HCT116 (cell line): ENCODE measurements at regions of chr21 and their contacts with region 1.

Region 1: GRCh38 chr21:44568754-44569556 is 4.6 kb upstream of the KRTAP10-4 start:
- DNase-seq: no peak
- ATAC-seq: no peak; the same call in 1 of the 2 replicates
- H3K4me3 ChIP-seq: no peak overlapping the region
- H3K27ac ChIP-seq: no peak overlapping the region
- H3K4me1 ChIP-seq: no peaks in the 10 kb centered on the region
- H3K27me3 ChIP-seq: peaks cover 6% of the 10 kb centered on the region
- CTCF ChIP-seq: no peak
- POLR2A ChIP-seq: no peak
- RAD21 ChIP-seq: no peak

Region 2: GRCh38 chr21:44487831-44488230 is 81.1 kb before region 1 on chr21:
- CTCF ChIA-PET with region 1: no interaction called
- POLR2A ChIA-PET with region 1: no interaction called
- RAD21 ChIA-PET with region 1: no interaction called
- intact Hi-C with region 1: no loop called
- DNase-seq: peak; percentile 28
- ATAC-seq: peak; percentile 55; the same call in 1 of the 2 replicates
- H3K4me3 ChIP-seq: no peak overlapping the region
- H3K27ac ChIP-seq: no peak overlapping the region
- H3K4me1 ChIP-seq: peaks cover 0 to 5% of the 10 kb centered on the region in 2 experiments; a peak in 1 of 4 replicates
- H3K27me3 ChIP-seq: no peaks in the 10 kb centered on the region
- CTCF ChIP-seq: peak in 2 of 3 experiments; percentile 81 to 84; a peak in 4 of 6 replicates
- POLR2A ChIP-seq: no peak
- RAD21 ChIP-seq: peak; percentile 50

Region 3: GRCh38 chr21:44677881-44678280 is 108.9 kb after region 1 on chr21:
- CTCF ChIA-PET with region 1: no interaction called
- POLR2A ChIA-PET with region 1: no interaction called
- RAD21 ChIA-PET with region 1: no interaction called
- intact Hi-C with region 1: loop called (anchors 10 kb)
- DNase-seq: no peak
- ATAC-seq: no peak
- H3K4me3 ChIP-seq: no peak overlapping the region
- H3K27ac ChIP-seq: no peak overlapping the region
- H3K4me1 ChIP-seq: no peaks in the 10 kb centered on the region
- H3K27me3 ChIP-seq: peaks cover 6% of the 10 kb centered on the region; the same call in 1 of the 2 replicates
- CTCF ChIP-seq: no peak
- POLR2A ChIP-seq: no peak
- RAD21 ChIP-seq: no peak